ENCODE measurements at regions of chr18 and their contacts with region 1.

Region 1: GRCh38 chr18:59996370-59996966 is 96.7 kb downstream of the PMAIP1 start:
- DNase-seq: peak; percentile 59
- ATAC-seq: peak; percentile 84
- H3K4me3 ChIP-seq: no peak overlapping the region
- H3K27ac ChIP-seq: no peak overlapping the region
- H3K4me1 ChIP-seq: peaks cover 6 to 11% of the 10 kb centered on the region in 2 experiments; a peak in 3 of 4 replicates
- H3K27me3 ChIP-seq: no peaks in the 10 kb centered on the region
- CTCF ChIP-seq: peak; percentile 76 to 90 (median 85)
- POLR2A ChIP-seq: no peak
- RAD21 ChIP-seq: peak; percentile 87

Region 2: DNA sequence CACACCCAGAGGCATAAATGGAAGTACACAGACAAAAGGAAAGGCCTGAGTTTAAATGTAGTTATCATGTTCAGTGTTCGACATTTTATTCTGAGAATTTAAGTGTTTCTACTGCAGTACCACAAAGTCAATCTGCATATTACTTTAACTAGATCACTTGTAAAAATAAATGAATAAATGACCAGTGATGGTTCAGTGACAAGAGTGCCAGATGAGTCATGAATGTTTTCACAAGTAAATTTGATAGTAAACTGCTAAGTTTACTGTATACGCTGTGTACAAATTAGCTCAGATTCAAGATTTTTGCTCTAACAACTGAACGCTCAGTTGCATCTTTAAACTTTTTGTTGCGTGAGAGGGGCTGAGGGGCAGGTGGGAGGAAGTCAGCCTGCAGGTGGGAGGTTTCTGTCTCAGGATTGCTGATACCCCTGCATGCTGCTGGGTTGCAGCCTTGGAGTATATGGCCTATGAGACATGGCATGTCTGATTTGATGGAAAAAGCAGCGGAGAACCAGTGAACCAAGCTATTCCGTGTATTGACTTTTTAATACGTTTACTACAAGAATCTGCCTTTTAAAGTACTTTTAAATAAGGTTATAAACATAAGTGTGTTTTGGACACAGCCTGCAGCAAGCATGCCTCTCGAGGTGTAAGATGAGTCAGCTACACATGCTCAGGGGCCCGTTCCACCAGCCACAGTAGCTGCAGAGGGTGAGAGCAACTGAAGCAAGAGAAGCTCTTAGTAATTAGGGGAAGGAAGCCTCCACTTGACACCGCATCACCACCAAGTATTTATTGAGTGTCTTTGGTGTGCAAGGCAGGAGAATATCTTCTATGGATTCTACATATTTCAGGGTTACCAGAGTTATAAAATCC is 1707.3 kb before region 1 on chr18:
- CTCF ChIA-PET with region 1: no interaction called
- POLR2A ChIA-PET with region 1: no interaction called
- RAD21 ChIA-PET with region 1: no interaction called
- intact Hi-C with region 1: no loop called
- DNase-seq: no peak
- ATAC-seq: peak; percentile 81
- H3K4me3 ChIP-seq: no peak overlapping the region
- H3K27ac ChIP-seq: 0 out of 2 replicates have a peak overlapping the region, but pooled peaks have one; percentile 12
- H3K4me1 ChIP-seq: peaks cover 30 to 40% of the 10 kb centered on the region in 2 experiments
- H3K27me3 ChIP-seq: no peaks in the 10 kb centered on the region
- CTCF ChIP-seq: no peak
- POLR2A ChIP-seq: no peak
- RAD21 ChIP-seq: no peak

Region 3: DNA sequence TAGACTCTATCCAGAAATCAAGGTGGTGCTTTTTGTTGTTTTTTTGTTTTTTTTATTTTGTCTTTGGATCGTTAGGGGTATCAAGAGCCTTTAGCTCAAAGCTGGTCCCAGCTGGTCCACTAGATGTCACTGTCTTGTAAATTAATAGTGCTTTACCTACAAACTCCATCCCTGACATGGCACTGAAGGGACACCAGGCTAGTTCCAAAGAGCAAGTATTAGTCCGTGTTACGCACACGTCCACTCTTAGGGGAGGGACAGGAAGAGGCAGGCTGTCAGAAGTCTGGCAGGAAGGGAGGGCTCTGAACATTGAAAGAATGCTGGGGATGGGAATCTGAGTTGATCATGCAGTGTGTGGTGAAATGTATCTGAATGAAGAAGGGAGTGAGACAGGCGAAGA is 213.3 kb before region 1 on chr18:
- CTCF ChIA-PET with region 1: no interaction called
- POLR2A ChIA-PET with region 1: no interaction called
- RAD21 ChIA-PET with region 1: no interaction called
- intact Hi-C with region 1: loop called (anchors 5 kb)
- DNase-seq: peak; percentile 85
- ATAC-seq: peak; percentile 96
- H3K4me3 ChIP-seq: peak overlapping the region; percentile 22 to 34; a peak in 3 of 4 replicates
- H3K27ac ChIP-seq: no peak overlapping the region
- H3K4me1 ChIP-seq: peaks cover 11 to 31% of the 10 kb centered on the region in 2 experiments
- H3K27me3 ChIP-seq: no peaks in the 10 kb centered on the region
- CTCF ChIP-seq: peak; percentile 66 to 82 (median 78); a peak in 5 of 6 replicates
- POLR2A ChIP-seq: no peak
- RAD21 ChIP-seq: peak; percentile 79

Region 4: DNA sequence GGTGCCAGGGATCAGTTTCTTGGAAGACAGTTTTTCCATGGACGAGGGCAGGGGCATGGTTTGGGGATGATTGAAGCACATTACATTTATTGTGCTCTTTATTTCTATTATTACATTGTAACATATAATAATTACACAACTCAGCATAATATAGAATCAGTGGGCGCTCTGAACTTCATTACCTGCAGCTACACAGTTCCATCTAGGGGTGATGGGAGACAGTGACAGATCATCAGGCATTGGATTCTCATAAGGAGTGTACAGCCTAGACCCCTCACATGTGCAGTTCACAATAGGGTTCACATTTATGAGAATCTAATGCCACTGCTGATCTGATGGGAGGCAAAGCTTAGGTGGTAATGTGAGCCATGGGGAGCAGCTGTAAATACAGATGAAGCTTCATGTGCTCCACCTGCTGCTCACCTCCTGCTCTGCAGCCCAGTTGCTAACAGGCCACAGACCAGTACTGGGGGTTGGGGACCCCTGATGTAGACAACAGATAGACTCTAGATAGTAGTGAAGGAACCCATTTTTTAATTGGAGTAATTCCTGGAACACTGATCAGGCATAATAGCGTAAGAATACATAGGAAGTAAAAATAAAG is 417.6 kb after region 1 on chr18:
- CTCF ChIA-PET with region 1: interaction called, 38 read pairs
- POLR2A ChIA-PET with region 1: no interaction called
- RAD21 ChIA-PET with region 1: interaction called in 1 of 2 experiments, 7 read pairs
- intact Hi-C with region 1: loop called (anchors 1 kb)
- DNase-seq: peak; percentile 10
- ATAC-seq: peak; percentile 92
- H3K4me3 ChIP-seq: no peak overlapping the region
- H3K27ac ChIP-seq: no peak overlapping the region
- H3K4me1 ChIP-seq: no peaks in the 10 kb centered on the region
- H3K27me3 ChIP-seq: no peaks in the 10 kb centered on the region
- CTCF ChIP-seq: peak; percentile 62 to 73 (median 68); a peak in 5 of 6 replicates
- POLR2A ChIP-seq: no peak
- RAD21 ChIP-seq: peak; percentile 60